ENCODE measurements at regions of chr3 and their contacts with region 1.

Region 1: DNA sequence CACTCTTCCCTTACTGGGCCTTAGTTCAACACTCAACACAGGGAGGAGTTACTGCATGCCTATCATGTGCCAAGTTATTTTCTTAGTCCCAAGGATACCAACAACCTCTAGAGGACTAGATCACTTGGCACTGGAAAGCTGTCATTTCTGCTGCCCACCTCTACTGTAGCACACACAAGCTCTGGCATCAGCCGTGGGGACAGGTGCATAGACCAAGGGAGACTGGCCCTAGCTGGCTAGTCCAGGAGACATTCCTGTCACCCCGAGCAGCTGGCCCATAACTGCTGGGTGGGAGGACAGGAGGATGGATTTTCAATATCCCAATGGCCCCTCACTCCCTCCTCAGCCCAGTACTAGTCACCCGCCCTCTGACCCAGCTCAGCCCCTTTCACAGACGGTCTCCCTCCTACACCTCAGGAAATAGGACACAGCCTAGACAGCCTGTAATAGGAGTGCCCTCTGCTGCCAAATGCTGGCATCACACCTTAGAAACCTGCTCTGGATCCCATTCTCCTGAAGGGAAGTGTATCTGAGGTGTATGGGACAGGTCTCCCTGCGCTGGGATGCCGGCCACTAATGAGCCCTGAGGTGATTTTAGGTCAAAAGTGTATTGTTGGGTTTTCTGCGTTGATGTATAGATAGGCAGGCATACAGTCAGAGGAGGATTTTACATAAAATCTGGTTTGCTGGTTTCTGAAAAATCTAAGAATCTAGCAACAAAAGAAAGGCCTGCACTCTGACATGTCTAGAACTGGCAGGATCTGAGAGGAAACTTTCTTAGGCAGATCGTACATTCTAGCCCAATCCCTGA is 3.4 kb upstream of the DZIP1L start:
- DNase-seq: peak in 1 of 2 donors; percentile 88
- H3K4me3 ChIP-seq: no peak overlapping the region
- H3K27ac ChIP-seq: no peak overlapping the region
- H3K4me1 ChIP-seq: peaks cover 0 to 5% of the 10 kb centered on the region in 2 donors
- H3K27me3 ChIP-seq: no peaks in the 10 kb centered on the region
- CTCF ChIP-seq: peak; percentile 54 to 86 (median 85)

Region 2: GRCh38 chr3:138068579-138069174 is 50.1 kb before region 1 on chr3:
- intact Hi-C with region 1: loop called (anchors 1 kb)
- DNase-seq: peak in 1 of 2 donors; percentile 84
- H3K4me3 ChIP-seq: no peak overlapping the region
- H3K27ac ChIP-seq: no peak overlapping the region
- H3K4me1 ChIP-seq: no peaks in the 10 kb centered on the region
- H3K27me3 ChIP-seq: no peaks in the 10 kb centered on the region
- CTCF ChIP-seq: peak; percentile 92 to 97 (median 93)

Region 3: GRCh38 chr3:138148503-138148902 is 29.7 kb after region 1 on chr3:
- intact Hi-C with region 1: no loop called
- DNase-seq: no peak
- H3K4me3 ChIP-seq: no peak overlapping the region
- H3K27ac ChIP-seq: no peak overlapping the region
- H3K4me1 ChIP-seq: no peaks in the 10 kb centered on the region
- H3K27me3 ChIP-seq: no peaks in the 10 kb centered on the region
- CTCF ChIP-seq: no peak

Region 4: GRCh38 chr3:138186803-138187295 is 68.0 kb after region 1 on chr3:
- intact Hi-C with region 1: loop called (anchors 5 kb)
- DNase-seq: peak; percentile 58 to 95
- H3K4me3 ChIP-seq: peak overlapping the region; percentile 95 to 100
- H3K27ac ChIP-seq: peak overlapping the region; percentile 97 to 100
- H3K4me1 ChIP-seq: peaks cover 2 to 24% of the 10 kb centered on the region in 2 donors
- H3K27me3 ChIP-seq: no peaks in the 10 kb centered on the region
- CTCF ChIP-seq: no peak

Region 5: DNA sequence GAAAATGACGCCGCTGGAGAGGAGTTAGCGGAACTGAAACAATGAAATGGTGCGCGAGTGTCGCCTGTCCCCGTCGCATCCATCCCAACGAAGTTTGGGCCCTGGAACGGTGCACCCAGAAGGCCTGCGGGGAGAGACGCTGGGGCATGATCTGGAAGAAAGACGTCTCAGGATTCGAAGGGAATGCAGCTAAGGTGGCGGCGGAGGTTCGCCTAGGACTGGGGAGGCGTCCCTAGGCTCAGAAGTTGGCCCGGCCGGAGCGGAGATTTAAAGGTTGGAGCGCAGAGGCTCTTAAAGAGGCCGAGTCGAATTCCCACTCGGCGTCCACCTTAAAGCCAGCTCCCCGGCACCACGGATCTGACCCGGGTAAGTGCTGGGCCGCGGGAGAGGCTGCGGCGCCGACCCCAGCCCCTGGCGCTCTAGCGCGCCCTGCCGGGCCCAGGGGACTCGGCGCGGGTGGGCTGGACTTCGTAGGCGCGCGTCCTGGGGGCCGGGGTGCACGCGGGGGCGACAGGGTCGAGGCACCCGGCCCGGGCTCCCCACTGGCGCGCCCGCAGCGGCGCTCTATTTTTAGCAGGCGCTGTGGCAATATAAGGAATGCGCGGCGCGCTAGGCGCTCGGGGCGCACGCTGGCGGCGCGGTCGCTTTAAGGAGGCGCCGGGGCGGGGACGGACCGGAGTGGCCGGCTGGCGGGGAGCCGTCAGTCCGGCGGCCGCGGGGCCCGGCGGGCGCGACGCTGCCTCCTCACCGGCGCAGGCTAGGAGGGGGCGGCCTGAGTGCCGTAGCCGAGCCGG is 229.3 kb after region 1 on chr3 and contains the start of gene MRAS:
- intact Hi-C with region 1: loop called (anchors 5 kb)
- DNase-seq: peak; percentile 28 to 91
- H3K4me3 ChIP-seq: peak within 1 kb of the TSS; percentile 96 to 98
- H3K27ac ChIP-seq: peak within 1 kb of the TSS; percentile 92 to 99
- H3K4me1 ChIP-seq: peaks cover 5 to 7% of the 10 kb centered on the region in 2 donors
- H3K27me3 ChIP-seq: no peaks in the 10 kb centered on the region
- CTCF ChIP-seq: peak in 2 of 3 experiments; percentile 28 to 39
- total RNA-seq, gene MRAS: 24.5 TPM

Region 6: GRCh38 chr3:138547342-138547975 is 428.6 kb after region 1 on chr3:
- intact Hi-C with region 1: no loop called
- DNase-seq: no peak
- H3K4me3 ChIP-seq: no peak overlapping the region
- H3K27ac ChIP-seq: no peak overlapping the region
- H3K4me1 ChIP-seq: no peaks in the 10 kb centered on the region
- H3K27me3 ChIP-seq: no peaks in the 10 kb centered on the region
- CTCF ChIP-seq: no peak

Region 7: GRCh38 chr3:138923531-138923994 is 804.7 kb after region 1 on chr3:
- intact Hi-C with region 1: loop called (anchors 10 kb)
- DNase-seq: peak; percentile 41 to 87
- H3K4me3 ChIP-seq: no peak overlapping the region
- H3K27ac ChIP-seq: no peak overlapping the region
- H3K4me1 ChIP-seq: peaks cover 0 to 2% of the 10 kb centered on the region in 2 donors
- H3K27me3 ChIP-seq: no peaks in the 10 kb centered on the region
- CTCF ChIP-seq: peak; percentile 42 to 76 (median 72)